Caco-2 (cell line): ENCODE measurements at regions of chr9 and their contacts with region 1.

Region 1: GRCh38 chr9:101398068-101398929 is at the starts of genes MRPL50 and ZNF189:
- DNase-seq: peak; percentile 96 to 98
- H3K4me3 ChIP-seq: peak within 1 kb of the TSS; percentile 45
- H3K4me3 Mint-ChIP-seq: peak within 1 kb of the TSS; percentile 97
- H3K27ac Mint-ChIP-seq: peak within 1 kb of the TSS; percentile 97
- H3K4me1 ChIP-seq: peaks cover 4% of the 10 kb centered on the region; the same call in 1 of the 2 replicates
- H3K4me1 Mint-ChIP-seq: peaks cover 19% of the 10 kb centered on the region
- H3K27me3 ChIP-seq: no peaks in the 10 kb centered on the region
- H3K27me3 Mint-ChIP-seq: no peaks in the 10 kb centered on the region
- CTCF ChIP-seq: no peak
- total RNA-seq, gene MRPL50: 15.6 and 17.5 TPM in 2 replicates
- total RNA-seq, gene ZNF189: 15.3 and 17.3 TPM in 2 replicates

Region 2: GRCh38 chr9:100515578-100516494 is 882.5 kb before region 1 on chr9:
- CTCF ChIA-PET with region 1: no interaction called
- POLR2A ChIA-PET with region 1: no interaction called
- intact Hi-C with region 1: no loop called
- DNase-seq: peak in 1 of 2 experiments; percentile 35
- H3K4me3 ChIP-seq: no peak overlapping the region
- H3K4me3 Mint-ChIP-seq: peak overlapping the region; percentile 55
- H3K27ac Mint-ChIP-seq: peak overlapping the region; percentile 38
- H3K4me1 ChIP-seq: no peaks in the 10 kb centered on the region; the same call in 1 of the 2 replicates
- H3K4me1 Mint-ChIP-seq: peaks cover 17% of the 10 kb centered on the region
- H3K27me3 ChIP-seq: no peaks in the 10 kb centered on the region
- H3K27me3 Mint-ChIP-seq: no peaks in the 10 kb centered on the region
- CTCF ChIP-seq: no peak

Region 3: GRCh38 chr9:101324245-101324804 is 74.0 kb before region 1 on chr9:
- CTCF ChIA-PET with region 1: no interaction called
- POLR2A ChIA-PET with region 1: no interaction called
- intact Hi-C with region 1: loop called (anchors 1 kb)
- DNase-seq: peak in 1 of 2 experiments; percentile 13
- H3K4me3 ChIP-seq: no peak overlapping the region
- H3K4me3 Mint-ChIP-seq: peak overlapping the region; percentile 11
- H3K27ac Mint-ChIP-seq: peak overlapping the region; percentile 15
- H3K4me1 ChIP-seq: peaks cover 52% of the 10 kb centered on the region
- H3K4me1 Mint-ChIP-seq: peaks cover 7% of the 10 kb centered on the region
- H3K27me3 ChIP-seq: no peaks in the 10 kb centered on the region
- H3K27me3 Mint-ChIP-seq: no peaks in the 10 kb centered on the region
- CTCF ChIP-seq: no peak

Region 4: DNA sequence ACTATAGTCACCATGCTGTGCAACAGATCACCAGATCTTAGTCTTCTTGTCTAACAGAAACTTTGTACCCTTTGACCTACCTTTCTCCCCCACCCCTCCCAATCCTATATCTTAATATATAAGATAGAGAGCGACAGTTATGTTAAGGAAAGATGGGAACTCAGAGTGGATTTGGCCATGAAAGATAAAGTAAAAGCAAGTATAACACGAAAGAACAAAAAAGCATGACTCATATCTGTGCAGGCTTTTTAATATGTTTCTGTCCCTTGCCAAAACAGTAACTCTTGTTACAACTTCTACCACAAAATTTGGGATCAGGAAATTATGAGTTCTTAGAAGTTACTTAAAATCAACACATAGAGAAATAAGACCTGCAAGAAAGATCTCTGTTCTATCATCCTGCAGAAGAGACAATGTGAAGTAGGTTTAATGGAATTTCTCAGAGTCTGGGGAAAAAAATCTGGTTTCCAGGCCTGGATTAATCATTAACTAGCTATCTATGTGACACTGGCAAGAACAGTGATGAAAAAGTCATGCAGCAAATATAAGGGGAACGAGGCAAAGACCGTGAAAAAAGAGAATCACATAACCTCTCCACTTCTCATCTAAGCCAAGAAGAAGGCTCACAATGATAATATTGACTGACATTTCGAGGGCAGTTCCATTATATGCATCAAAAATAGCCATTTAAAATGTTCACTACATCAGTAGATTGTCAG is 32.1 kb before region 1 on chr9:
- CTCF ChIA-PET with region 1: no interaction called
- POLR2A ChIA-PET with region 1: interaction called, 3 read pairs
- intact Hi-C with region 1: loop called (anchors 1 kb)
- DNase-seq: peak in 1 of 2 experiments; percentile 56
- H3K4me3 ChIP-seq: peak overlapping the region; percentile 18; the same call in 1 of the 2 replicates
- H3K4me3 Mint-ChIP-seq: peak overlapping the region; percentile 67
- H3K27ac Mint-ChIP-seq: peak overlapping the region; percentile 30
- H3K4me1 ChIP-seq: peaks cover 41% of the 10 kb centered on the region
- H3K4me1 Mint-ChIP-seq: peaks cover 22% of the 10 kb centered on the region
- H3K27me3 ChIP-seq: no peaks in the 10 kb centered on the region
- H3K27me3 Mint-ChIP-seq: no peaks in the 10 kb centered on the region
- CTCF ChIP-seq: no peak

Region 5: DNA sequence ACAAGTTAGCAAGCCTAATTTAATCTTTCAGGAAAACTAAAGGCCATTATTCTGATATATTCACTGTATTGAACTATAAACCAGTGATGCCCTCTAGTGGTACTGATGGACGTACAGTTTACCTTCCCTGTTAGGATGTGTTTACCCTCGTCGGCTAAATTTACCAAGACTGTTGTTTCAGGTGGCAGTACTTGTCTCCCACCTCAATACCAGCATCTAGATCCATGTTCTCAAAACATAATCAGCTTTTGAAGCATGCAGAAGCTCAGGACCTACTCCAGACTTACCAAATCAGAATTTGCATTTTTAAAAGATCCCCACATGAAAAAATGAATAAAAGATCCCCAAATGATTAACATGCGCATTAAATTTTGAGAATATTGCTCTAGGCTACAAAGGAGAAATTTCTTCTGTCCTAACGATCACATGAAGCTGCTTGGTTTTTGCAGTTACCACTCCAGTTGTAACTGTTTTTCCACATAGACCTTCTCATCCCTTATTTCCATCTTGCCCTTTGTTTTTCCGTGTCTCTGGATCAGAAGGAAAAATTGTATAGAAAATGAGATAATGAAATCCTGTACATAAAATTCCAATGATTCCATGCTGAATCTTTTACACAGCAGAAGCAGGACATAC is 10.3 kb before region 1 on chr9:
- CTCF ChIA-PET with region 1: interaction called, 4 read pairs
- POLR2A ChIA-PET with region 1: interaction called, 13 read pairs
- intact Hi-C with region 1: no loop called
- DNase-seq: peak; percentile 36 to 46
- H3K4me3 ChIP-seq: no peak overlapping the region
- H3K4me3 Mint-ChIP-seq: no peak overlapping the region
- H3K27ac Mint-ChIP-seq: no peak overlapping the region
- H3K4me1 ChIP-seq: 0 out of 2 replicates have a peak, but pooled peaks cover 3% of the 10 kb centered on the region
- H3K4me1 Mint-ChIP-seq: peaks cover 13% of the 10 kb centered on the region
- H3K27me3 ChIP-seq: no peaks in the 10 kb centered on the region
- H3K27me3 Mint-ChIP-seq: no peaks in the 10 kb centered on the region
- CTCF ChIP-seq: peak; percentile 43 to 46

Region 6: DNA sequence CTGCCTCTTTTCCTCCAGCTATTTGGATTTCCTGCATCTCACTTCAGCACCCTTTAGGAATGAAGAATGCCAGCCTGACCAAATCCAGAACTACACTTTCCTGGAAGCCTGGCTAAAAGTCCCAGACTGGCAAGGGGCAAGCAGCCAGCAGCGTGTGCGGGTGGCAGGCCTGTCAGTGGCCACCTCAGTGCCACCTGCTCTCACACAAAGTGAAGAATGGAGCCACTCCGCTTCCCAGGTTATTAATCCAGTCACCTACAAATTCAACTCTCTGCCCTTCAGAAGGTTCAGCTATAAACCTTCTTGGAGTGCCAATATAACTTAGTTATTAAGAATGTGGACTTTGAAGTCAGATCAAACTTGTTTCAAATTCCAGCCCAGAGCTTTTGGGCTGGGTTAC is 44.0 kb after region 1 on chr9:
- CTCF ChIA-PET with region 1: no interaction called
- POLR2A ChIA-PET with region 1: no interaction called
- intact Hi-C with region 1: loop called (anchors 1 kb)
- DNase-seq: no peak
- H3K4me3 ChIP-seq: no peak overlapping the region
- H3K4me3 Mint-ChIP-seq: no peak overlapping the region
- H3K27ac Mint-ChIP-seq: no peak overlapping the region
- H3K4me1 ChIP-seq: peaks cover 30% of the 10 kb centered on the region
- H3K4me1 Mint-ChIP-seq: peaks cover 23% of the 10 kb centered on the region
- H3K27me3 ChIP-seq: no peaks in the 10 kb centered on the region
- H3K27me3 Mint-ChIP-seq: no peaks in the 10 kb centered on the region
- CTCF ChIP-seq: no peak

Region 7: DNA sequence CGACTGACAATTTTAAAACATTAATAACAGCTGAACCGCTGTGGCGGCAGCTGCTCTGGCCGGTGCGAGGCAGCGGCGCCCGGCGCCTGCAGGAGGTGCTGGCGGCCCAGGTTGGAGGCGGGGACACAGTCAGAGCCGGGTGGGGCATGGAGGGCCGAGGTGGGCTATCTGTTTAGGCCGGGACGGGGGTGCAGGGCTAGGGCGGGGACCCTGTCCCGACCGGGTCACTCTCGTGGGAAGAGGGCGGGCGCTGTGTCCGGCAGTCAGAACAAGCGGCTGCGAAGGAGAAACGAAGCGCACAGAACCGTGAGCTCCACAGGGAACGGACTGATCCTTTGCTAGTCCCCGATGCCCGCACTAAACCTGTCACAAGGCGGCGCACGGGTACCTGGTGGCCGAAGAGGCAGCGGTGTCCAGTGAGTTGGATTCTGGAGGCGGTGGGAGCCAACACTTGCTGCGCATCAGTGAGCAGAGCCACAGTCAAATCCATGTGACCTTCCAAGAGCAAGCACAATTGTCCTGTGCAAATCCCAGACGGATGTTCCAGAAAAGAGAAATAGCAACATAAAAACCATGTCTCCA is 50.9 kb after region 1 on chr9:
- CTCF ChIA-PET with region 1: interaction called, 11 read pairs
- POLR2A ChIA-PET with region 1: interaction called, 3 read pairs
- intact Hi-C with region 1: loop called (anchors 2 kb)
- DNase-seq: peak; percentile 88 to 90
- H3K4me3 ChIP-seq: peak overlapping the region; percentile 59
- H3K4me3 Mint-ChIP-seq: peak overlapping the region; percentile 72
- H3K27ac Mint-ChIP-seq: peak overlapping the region; percentile 70
- H3K4me1 ChIP-seq: peaks cover 6% of the 10 kb centered on the region; the same call in 1 of the 2 replicates
- H3K4me1 Mint-ChIP-seq: peaks cover 16% of the 10 kb centered on the region
- H3K27me3 ChIP-seq: no peaks in the 10 kb centered on the region
- H3K27me3 Mint-ChIP-seq: no peaks in the 10 kb centered on the region
- CTCF ChIP-seq: peak; percentile 59 to 82

Region 8: GRCh38 chr9:101468116-101468515 is 69.8 kb after region 1 on chr9:
- CTCF ChIA-PET with region 1: no interaction called
- POLR2A ChIA-PET with region 1: no interaction called
- intact Hi-C with region 1: no loop called
- DNase-seq: no peak
- H3K4me3 ChIP-seq: no peak overlapping the region
- H3K4me3 Mint-ChIP-seq: no peak overlapping the region
- H3K27ac Mint-ChIP-seq: no peak overlapping the region
- H3K4me1 ChIP-seq: no peaks in the 10 kb centered on the region
- H3K4me1 Mint-ChIP-seq: peaks cover 7% of the 10 kb centered on the region
- H3K27me3 ChIP-seq: no peaks in the 10 kb centered on the region; the same call in 1 of the 2 replicates
- H3K27me3 Mint-ChIP-seq: peaks cover 6% of the 10 kb centered on the region
- CTCF ChIP-seq: no peak

Region 9: GRCh38 chr9:101530077-101530711 is 131.9 kb after region 1 on chr9:
- CTCF ChIA-PET with region 1: no interaction called
- POLR2A ChIA-PET with region 1: interaction called, 6 read pairs
- intact Hi-C with region 1: loop called (anchors 1 kb)
- DNase-seq: peak; percentile 71 to 81
- H3K4me3 ChIP-seq: no peak overlapping the region
- H3K4me3 Mint-ChIP-seq: no peak overlapping the region
- H3K27ac Mint-ChIP-seq: no peak overlapping the region
- H3K4me1 ChIP-seq: no peaks in the 10 kb centered on the region
- H3K4me1 Mint-ChIP-seq: no peaks in the 10 kb centered on the region
- H3K27me3 ChIP-seq: no peaks in the 10 kb centered on the region
- H3K27me3 Mint-ChIP-seq: no peaks in the 10 kb centered on the region
- CTCF ChIP-seq: peak; percentile 80 to 82